Mammary epithelial cell (primary cell): ENCODE measurements at regions of chr20 and their contacts with region 1.

Region 1: DNA sequence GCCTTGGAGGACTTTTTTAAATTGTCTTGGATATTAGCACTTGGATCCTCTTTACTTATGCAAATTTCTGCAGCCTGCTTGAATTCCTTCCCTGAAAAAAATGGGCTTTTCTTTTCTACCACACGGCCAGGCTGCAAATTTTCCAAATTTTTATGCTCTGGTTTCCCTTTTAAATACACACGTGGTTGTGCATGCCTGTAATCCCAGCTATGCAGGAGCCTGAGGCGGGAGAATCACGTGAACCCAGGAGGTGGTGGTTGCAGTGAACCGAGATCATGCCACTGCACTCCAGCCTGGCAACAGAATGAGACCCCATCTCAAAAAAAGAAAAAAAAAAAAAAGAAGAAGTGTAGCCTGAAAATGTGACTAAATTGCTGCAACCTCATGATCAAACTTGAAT is 76.1 kb upstream of the PRND start:
- DNase-seq: no peak
- H3K4me3 ChIP-seq: no peak overlapping the region
- H3K27ac ChIP-seq: no peak overlapping the region
- H3K4me1 ChIP-seq: no peaks in the 10 kb centered on the region
- H3K27me3 ChIP-seq: no peaks in the 10 kb centered on the region
- CTCF ChIP-seq: no peak

Region 2: DNA sequence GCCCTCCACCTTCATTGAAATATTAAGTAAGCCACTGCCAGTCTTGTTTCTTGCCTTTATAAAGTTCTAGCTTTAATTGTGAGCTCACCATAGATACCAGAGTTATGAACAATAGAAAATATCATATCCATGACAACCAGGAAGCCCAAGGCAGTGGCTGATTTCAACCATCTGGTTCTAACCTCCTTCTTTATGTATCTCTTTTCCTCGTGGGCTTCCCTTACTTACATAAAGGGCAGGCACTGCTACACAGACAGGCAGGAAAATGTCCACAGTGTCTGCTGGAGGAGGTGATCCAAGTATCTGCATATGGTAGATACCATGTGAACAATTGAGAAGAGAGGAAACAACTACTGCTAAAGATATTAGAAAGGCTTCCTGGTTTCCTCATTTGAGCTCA is 10.8 kb after region 1 on chr20:
- CTCF ChIA-PET with region 1: interaction called, 11 read pairs
- dilution Hi-C with region 1: no loop called
- in situ Hi-C with region 1: no loop called
- intact Hi-C with region 1: no loop called
- DNase-seq: no peak
- H3K4me3 ChIP-seq: no peak overlapping the region
- H3K27ac ChIP-seq: no peak overlapping the region
- H3K4me1 ChIP-seq: no peaks in the 10 kb centered on the region
- H3K27me3 ChIP-seq: no peaks in the 10 kb centered on the region
- CTCF ChIP-seq: no peak

Region 3: GRCh38 chr20:4780245-4780644 is 134.6 kb after region 1 on chr20:
- CTCF ChIA-PET with region 1: no interaction called
- dilution Hi-C with region 1: no loop called
- in situ Hi-C with region 1: no loop called
- intact Hi-C with region 1: no loop called
- DNase-seq: no peak
- H3K4me3 ChIP-seq: no peak overlapping the region
- H3K27ac ChIP-seq: no peak overlapping the region
- H3K4me1 ChIP-seq: no peaks in the 10 kb centered on the region
- H3K27me3 ChIP-seq: peaks cover 3% of the 10 kb centered on the region
- CTCF ChIP-seq: no peak